Activated CD8-positive, alpha-beta memory T cell treated with anti-CD3 and anti-CD28 coated beads, Interleukin-2, amount 10 ng/mL, durations not matched to agents 7 days and 5 days (primary cell): ENCODE measurements at regions of chr22 and their contacts with region 1.

Region 1: DNA sequence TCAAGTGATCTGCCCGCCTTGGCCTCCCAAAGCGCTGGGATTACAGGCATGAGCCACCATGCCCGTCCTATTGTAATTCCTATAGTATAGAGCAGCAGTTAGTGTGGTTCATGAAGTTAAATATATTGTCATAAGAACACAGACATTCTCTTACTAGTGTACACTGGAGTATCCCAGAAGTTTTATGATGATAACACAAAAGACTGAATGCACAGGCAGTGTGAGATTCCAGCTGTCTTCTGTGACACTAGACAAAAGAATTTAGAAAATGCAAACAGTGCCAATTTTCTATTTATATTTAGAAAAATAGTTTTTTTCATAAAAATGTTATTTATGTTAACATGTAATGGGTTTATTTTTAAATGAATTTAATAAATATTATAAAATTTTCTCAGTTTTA is 39.4 kb upstream of the RBX1 start:
- DNase-seq: no peak
- ATAC-seq: no peak
- H3K4me3 Mint-ChIP-seq: no peak overlapping the region
- H3K27ac Mint-ChIP-seq: no peak overlapping the region
- H3K4me1 Mint-ChIP-seq: no peaks in the 10 kb centered on the region
- H3K27me3 Mint-ChIP-seq: no peaks in the 10 kb centered on the region

Region 2: GRCh38 chr22:40898850-40899357 is 12.9 kb before region 1 on chr22:
- CTCF ChIA-PET with region 1: interaction called, 12 read pairs
- DNase-seq: no peak
- ATAC-seq: peak; percentile 80
- H3K4me3 Mint-ChIP-seq: peak overlapping the region; percentile 33
- H3K27ac Mint-ChIP-seq: peak overlapping the region; percentile 71
- H3K4me1 Mint-ChIP-seq: peaks cover 16% of the 10 kb centered on the region
- H3K27me3 Mint-ChIP-seq: no peaks in the 10 kb centered on the region